Sigmoid colon (tissue), 7 donors: ENCODE measurements at regions of chr14 and their contacts with region 1.

Region 1: GRCh38 chr14:96100161-96101029 is 61.2 kb downstream of the C14orf132 start:
- DNase-seq: peak; percentile 87
- H3K4me3 ChIP-seq: no peak overlapping the region
- H3K27ac ChIP-seq: peak overlapping the region in 1 of 4 donors; percentile 36
- H3K4me1 ChIP-seq: peaks cover 0 to 29% (median 25%) of the 10 kb centered on the region in 4 donors
- H3K27me3 ChIP-seq: no peaks in the 10 kb centered on the region
- CTCF ChIP-seq: peak; percentile 87 to 94 (median 88)
- EP300 ChIP-seq: no peak
- POLR2A ChIP-seq: no peak

Region 2: DNA sequence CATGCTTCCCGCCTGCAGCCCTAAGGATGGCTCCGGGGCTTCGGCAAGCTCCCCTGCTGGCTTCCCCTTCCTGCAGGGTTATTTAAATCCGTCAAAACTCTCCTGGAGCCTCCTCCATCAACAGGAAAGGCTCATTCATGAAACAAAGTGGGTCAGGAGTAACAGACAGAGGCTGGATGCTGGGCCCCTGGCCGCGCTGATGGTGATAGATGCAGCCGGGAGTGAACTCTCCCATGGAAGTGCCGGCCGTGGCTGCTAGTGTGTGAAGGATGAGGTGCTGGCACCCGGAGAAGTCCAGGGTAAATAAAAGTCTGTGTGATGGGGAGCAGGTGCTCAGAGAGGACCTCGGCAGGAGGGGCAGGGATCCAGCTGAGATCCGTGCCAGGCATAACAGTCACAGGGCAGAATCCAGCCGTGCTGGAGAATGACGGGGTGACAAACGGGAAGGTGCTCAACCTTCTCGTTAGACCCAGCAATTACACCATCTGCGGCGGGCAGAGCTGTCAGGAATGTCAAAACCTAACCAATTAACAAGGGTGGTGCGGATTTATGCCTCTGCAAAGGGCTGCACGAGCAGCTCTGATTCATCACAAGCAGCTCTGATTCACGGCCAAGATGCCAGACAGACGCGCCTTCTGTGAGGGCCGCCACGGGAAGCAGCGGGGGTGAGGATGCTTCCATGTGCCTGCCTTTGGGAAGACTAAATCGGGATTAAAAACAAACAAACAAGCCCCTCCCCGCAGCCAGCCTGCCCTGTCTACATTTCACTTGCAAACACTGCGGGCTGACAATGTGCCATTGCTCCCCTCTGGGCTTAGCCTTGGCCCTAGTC is 639.5 kb before region 1 on chr14:
- intact Hi-C with region 1: loop called (anchors 5 kb)
- DNase-seq: peak; percentile 88
- H3K4me3 ChIP-seq: peak overlapping the region in 1 of 4 donors; percentile 4
- H3K27ac ChIP-seq: peak overlapping the region; percentile 18 to 50 (median 46)
- H3K4me1 ChIP-seq: peaks cover 0 to 26% (median 16%) of the 10 kb centered on the region in 4 donors
- H3K27me3 ChIP-seq: no peaks in the 10 kb centered on the region
- CTCF ChIP-seq: no peak
- EP300 ChIP-seq: peak in 3 of 4 donors; percentile 39 to 61 (median 41)
- POLR2A ChIP-seq: no peak

Region 3: GRCh38 chr14:96038920-96039632 is 61.3 kb before region 1 on chr14 and contains the start of gene C14orf132:
- intact Hi-C with region 1: loop called (anchors 5 kb)
- DNase-seq: peak; percentile 85
- H3K4me3 ChIP-seq: peak within 1 kb of the TSS; percentile 70 to 96 (median 85)
- H3K27ac ChIP-seq: peak within 1 kb of the TSS; percentile 83 to 96 (median 90)
- H3K4me1 ChIP-seq: peaks cover 0 to 44% (median 33%) of the 10 kb centered on the region in 4 donors
- H3K27me3 ChIP-seq: no peaks in the 10 kb centered on the region
- CTCF ChIP-seq: no peak
- EP300 ChIP-seq: no peak
- POLR2A ChIP-seq: peak; percentile 48 to 65
- total RNA-seq, gene C14orf132: 10.4 to 30.4 (median 23.6) TPM

Region 4: GRCh38 chr14:96255501-96256366 is 155.3 kb after region 1 on chr14 and contains the start of gene BDKRB1:
- intact Hi-C with region 1: loop called (anchors 1 kb)
- DNase-seq: no peak
- H3K4me3 ChIP-seq: no peak within 1 kb of the TSS
- H3K27ac ChIP-seq: peak within 1 kb of the TSS; percentile 79 to 90 (median 84)
- H3K4me1 ChIP-seq: peaks cover 0 to 49% (median 43%) of the 10 kb centered on the region in 4 donors
- H3K27me3 ChIP-seq: no peaks in the 10 kb centered on the region
- CTCF ChIP-seq: no peak
- EP300 ChIP-seq: peak in 3 of 4 donors; percentile 69 to 91 (median 88)
- POLR2A ChIP-seq: no peak
- total RNA-seq, gene BDKRB1: 0.33 to 2.9 (median 0.73) TPM

Region 5: DNA sequence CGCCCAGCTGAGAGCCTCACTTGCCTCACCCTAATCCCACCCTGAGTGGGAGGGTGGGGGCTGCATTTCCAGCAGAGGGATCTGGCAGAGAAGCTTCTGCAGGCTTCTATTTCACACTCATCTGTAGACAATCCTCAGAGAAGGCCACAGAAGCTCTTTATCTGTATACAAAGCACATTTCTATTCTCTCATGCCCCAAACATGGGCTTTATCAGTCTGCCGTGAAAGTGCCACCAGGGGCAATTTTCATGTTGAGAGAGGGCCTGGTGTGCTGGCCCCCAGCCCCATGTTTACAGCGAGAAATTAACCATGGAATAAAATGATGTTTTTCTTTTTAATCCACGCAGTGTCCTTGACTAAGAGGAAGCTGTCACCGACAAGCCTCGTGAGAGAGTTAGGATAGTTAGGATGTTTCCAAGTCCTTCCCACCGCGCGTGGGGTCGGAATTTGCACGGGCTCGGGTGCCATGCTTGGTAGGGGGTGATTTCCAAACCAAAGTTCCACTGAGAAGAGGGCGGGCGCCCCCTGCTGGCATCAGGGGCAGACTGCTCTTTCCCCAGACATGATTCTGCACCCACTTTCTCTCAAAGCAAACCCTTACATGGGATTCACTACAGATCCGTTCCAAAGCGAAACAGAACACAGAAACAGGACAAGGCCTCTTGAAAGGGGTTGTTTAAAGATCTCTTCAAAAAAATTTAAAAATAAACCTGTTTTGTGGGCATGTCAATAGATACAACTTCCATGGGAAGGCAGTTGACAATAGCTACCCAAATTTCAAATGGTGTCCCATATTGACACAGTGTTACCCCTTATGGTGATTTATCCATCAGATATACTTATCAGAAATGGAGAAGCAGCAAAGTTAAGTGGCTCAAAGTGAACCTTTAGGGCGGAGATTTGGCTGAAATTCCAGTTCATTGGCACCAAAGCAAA is 175.1 kb after region 1 on chr14:
- intact Hi-C with region 1: loop called (anchors 1 kb)
- DNase-seq: peak; percentile 87
- H3K4me3 ChIP-seq: no peak overlapping the region
- H3K27ac ChIP-seq: peak overlapping the region; percentile 5 to 72 (median 51)
- H3K4me1 ChIP-seq: peaks cover 0 to 34% (median 17%) of the 10 kb centered on the region in 4 donors
- H3K27me3 ChIP-seq: no peaks in the 10 kb centered on the region
- CTCF ChIP-seq: peak; percentile 83 to 98 (median 92)
- EP300 ChIP-seq: no peak
- POLR2A ChIP-seq: no peak

Region 6: DNA sequence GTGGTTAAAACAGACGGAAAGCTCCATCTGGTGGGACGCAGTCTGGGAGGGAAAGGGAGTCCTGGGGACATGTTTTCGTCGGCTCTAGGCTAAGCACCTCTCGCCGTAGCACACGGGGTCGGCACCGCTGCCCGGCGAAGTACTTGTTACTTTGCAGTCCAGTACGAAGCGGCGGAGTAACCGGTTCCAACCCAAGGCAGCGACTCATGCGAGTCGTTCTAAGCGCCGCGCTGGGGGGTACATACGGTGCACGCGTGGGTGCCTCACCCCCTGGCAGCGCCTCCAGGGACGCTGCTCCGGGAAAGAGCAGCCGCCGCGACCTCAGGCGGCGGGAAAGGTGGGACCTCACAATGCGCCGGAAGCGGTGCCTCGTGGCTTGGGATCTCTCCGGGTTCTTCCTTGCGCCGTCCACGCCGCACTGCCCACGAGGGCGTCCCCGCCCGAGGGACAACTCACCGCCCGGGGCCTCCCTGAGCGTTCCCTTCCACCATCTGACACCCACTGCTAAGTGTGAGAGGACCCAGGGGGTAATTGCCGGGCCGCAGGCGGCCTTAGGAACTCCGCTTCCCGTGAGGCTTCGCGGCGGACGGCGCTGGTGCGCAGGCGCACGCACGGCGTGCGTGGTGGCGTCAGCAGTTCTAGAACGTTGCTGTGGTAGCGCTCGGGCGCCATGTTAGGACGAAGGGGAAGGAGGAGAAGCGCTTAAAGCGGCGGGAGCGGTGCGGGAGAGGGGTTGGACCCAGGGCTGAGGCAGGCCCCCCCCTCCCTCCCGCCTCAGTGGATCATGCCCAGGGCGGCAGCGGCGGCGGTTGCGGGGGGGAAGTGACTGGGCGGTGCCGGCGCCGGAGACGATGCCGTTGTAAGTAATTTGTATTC is 401.6 kb after region 1 on chr14 and contains the start of gene PAPOLA:
- intact Hi-C with region 1: loop called (anchors 5 kb)
- DNase-seq: peak; percentile 96
- H3K4me3 ChIP-seq: peak within 1 kb of the TSS; percentile 59 to 88 (median 80)
- H3K27ac ChIP-seq: peak within 1 kb of the TSS; percentile 87 to 98 (median 95)
- H3K4me1 ChIP-seq: peaks cover 0 to 46% (median 38%) of the 10 kb centered on the region in 4 donors
- H3K27me3 ChIP-seq: no peaks in the 10 kb centered on the region
- CTCF ChIP-seq: peak in 1 of 4 experiments; percentile 14
- EP300 ChIP-seq: no peak
- POLR2A ChIP-seq: peak; percentile 44 to 63
- total RNA-seq, gene PAPOLA: 113 to 154 (median 133) TPM